Activated CD8-positive, alpha-beta T cell treated with anti-CD3 and anti-CD28 coated beads, Interleukin-2, amount 10 ng/mL, durations not matched to agents 7 days and 5 days (primary cell): ENCODE measurements at regions of chr18 and their contacts with region 1.

Region 1: DNA sequence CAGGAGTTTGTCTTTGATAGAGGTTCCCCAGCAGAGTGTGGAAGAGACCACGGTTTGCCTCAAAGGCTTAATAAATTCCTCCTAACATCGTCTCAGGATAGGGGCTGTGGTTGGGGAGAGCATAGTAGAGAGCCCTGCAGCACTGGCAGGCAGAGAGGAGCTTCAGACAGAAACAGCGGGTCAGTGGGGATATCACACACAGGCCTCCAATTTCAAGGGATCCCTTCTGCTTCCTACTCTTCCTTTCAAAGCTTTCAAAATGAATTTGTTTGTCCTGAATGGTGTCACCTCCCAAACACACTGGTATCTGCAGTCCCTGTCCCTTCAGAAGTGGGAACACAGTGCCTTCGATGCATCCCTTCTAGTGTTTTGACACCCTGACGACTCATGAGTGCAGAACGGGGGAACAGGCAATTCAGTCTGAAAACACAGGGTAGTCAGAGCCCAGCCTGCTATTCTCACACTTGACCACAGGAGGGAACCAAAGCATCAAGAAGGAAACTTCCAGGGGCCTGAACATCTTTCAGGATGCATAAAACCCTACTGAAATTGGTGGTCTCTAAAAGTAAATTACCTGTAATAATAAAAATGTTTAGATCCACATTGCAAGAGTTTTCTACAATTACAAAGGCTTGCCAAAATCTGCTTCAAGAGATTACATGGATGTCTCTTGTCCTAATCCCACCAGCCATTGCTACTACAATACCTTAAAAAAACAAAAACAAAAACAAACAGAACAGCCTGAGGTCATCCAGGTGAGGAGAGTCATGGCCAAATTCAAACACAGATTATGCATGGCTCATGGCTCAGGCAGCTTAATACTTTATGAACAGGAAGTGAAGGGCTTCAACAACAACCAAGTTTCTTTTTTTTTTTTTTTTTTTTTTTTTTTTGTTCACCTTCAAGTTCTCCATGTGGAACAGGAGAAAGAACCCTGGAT is 49.8 kb downstream of the SLC14A2 start:
- DNase-seq: peak; percentile 81
- ATAC-seq: peak; percentile 38
- H3K4me3 Mint-ChIP-seq: peak overlapping the region; percentile 34
- H3K27ac Mint-ChIP-seq: peak overlapping the region; percentile 85
- H3K4me1 Mint-ChIP-seq: peaks cover 53% of the 10 kb centered on the region
- H3K27me3 Mint-ChIP-seq: no peaks in the 10 kb centered on the region

Region 2: GRCh38 chr18:45652303-45653080 is 12.6 kb before region 1 on chr18:
- CTCF ChIA-PET with region 1: interaction called, 15 read pairs
- POLR2A ChIA-PET with region 1: interaction called, 3 read pairs
- DNase-seq: no peak
- ATAC-seq: no peak
- H3K4me3 Mint-ChIP-seq: no peak overlapping the region
- H3K27ac Mint-ChIP-seq: no peak overlapping the region
- H3K4me1 Mint-ChIP-seq: peaks cover 24% of the 10 kb centered on the region
- H3K27me3 Mint-ChIP-seq: peaks cover 23% of the 10 kb centered on the region

Region 3: DNA sequence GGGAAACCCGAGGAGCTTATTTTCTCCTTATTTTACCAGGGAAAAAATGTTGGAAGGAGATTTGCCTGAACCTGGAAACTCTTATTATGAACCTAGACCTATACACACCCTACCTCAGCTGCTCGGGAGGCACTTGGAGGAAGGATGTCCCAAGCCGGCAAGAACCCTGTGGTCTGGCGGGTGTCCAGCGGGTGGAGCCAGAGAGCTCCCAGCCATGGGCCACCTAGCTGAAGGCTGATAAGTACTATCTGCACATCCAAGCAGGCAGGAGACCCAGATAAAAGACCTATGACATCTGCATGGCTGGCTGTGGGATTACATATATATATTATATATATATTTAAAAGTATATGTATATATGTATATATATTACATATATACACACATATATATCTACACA is 57.8 kb after region 1 on chr18:
- CTCF ChIA-PET with region 1: interaction called, 47 read pairs
- POLR2A ChIA-PET with region 1: no interaction called
- DNase-seq: peak; percentile 81
- ATAC-seq: peak; percentile 90
- H3K4me3 Mint-ChIP-seq: no peak overlapping the region
- H3K27ac Mint-ChIP-seq: no peak overlapping the region
- H3K4me1 Mint-ChIP-seq: peaks cover 6% of the 10 kb centered on the region
- H3K27me3 Mint-ChIP-seq: peaks cover 6% of the 10 kb centered on the region

Region 4: GRCh38 chr18:45802608-45803492 is 137.8 kb after region 1 on chr18:
- CTCF ChIA-PET with region 1: interaction called, 12 read pairs
- POLR2A ChIA-PET with region 1: no interaction called
- DNase-seq: no peak
- ATAC-seq: no peak
- H3K4me3 Mint-ChIP-seq: no peak overlapping the region
- H3K27ac Mint-ChIP-seq: no peak overlapping the region
- H3K4me1 Mint-ChIP-seq: no peaks in the 10 kb centered on the region
- H3K27me3 Mint-ChIP-seq: peaks cover 2% of the 10 kb centered on the region

Region 5: DNA sequence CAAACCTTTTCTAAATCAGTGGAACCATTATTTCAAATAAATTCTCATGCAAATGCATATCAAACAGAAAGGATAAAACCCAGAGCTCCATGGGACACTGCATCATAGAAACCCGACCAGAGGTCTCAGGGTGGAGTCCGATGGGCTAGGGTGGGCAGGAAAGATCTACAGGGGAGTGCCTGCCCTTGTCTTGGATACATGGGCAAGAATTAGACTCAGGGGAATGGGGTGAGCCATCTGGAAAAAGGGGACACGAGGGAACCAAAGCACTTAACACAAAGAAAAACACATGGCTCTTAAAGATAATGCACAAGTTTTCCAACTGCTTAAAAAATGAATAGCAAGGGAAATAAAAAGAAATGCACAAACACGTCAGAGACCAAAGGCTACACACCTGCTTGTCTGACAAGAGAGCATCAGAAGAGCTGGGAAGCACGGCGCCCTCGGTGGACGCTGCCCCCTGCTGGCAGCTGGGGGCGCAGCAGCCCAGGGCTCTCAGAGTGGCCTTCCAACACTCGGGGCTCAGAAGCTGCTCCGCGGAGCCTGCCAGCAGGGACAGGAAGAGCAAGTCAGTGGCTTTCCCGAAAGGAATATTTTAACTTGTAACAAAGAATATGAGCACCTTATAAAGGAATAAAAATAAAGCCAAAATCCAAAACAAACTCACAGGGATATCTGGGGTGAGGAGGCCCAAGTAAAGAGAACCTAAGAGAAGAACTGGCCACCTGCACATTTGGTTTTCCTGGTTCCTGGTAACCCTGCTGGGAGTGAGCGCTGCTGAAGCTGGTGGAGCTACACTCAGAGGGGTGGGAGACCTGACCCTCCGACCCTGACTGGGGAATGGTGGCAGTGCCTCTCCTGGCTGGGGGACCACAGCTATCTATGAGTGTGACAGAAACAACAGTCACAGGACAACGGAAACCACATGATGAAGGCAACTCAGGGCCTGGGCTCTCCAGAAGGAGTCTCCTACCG is 214.9 kb after region 1 on chr18:
- CTCF ChIA-PET with region 1: interaction called, 156 read pairs
- POLR2A ChIA-PET with region 1: no interaction called
- DNase-seq: peak; percentile 76
- ATAC-seq: peak; percentile 91
- H3K4me3 Mint-ChIP-seq: no peak overlapping the region
- H3K27ac Mint-ChIP-seq: peak overlapping the region; percentile 55
- H3K4me1 Mint-ChIP-seq: peaks cover 14% of the 10 kb centered on the region
- H3K27me3 Mint-ChIP-seq: no peaks in the 10 kb centered on the region

Region 6: DNA sequence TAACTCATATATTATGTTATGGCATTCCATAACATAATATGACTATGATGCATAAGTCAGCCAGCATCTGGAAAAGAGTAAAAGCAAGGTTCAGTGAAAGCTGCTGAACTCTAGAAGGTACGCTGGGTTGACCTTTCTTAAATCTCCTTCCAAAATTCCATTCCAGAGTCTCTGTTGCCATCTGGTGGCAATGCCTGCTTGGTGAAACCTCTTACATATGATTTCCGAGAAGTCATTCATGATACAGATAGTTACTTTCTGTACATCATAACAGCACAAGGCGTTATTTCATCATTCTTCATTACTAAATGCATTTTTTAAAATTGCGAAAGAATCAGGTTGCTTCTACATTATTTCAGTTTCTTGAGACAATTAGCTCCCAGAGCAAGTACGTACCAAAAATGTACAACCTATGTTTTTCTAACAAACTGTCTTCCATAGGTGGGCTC is 309.0 kb after region 1 on chr18:
- CTCF ChIA-PET with region 1: interaction called, 25 read pairs
- POLR2A ChIA-PET with region 1: no interaction called
- DNase-seq: peak; percentile 80
- ATAC-seq: peak; percentile 74
- H3K4me3 Mint-ChIP-seq: no peak overlapping the region
- H3K27ac Mint-ChIP-seq: peak overlapping the region; percentile 2
- H3K4me1 Mint-ChIP-seq: peaks cover 7% of the 10 kb centered on the region
- H3K27me3 Mint-ChIP-seq: no peaks in the 10 kb centered on the region